ENCODE measurements at regions of chr17 and their contacts with region 1.

Region 1: DNA sequence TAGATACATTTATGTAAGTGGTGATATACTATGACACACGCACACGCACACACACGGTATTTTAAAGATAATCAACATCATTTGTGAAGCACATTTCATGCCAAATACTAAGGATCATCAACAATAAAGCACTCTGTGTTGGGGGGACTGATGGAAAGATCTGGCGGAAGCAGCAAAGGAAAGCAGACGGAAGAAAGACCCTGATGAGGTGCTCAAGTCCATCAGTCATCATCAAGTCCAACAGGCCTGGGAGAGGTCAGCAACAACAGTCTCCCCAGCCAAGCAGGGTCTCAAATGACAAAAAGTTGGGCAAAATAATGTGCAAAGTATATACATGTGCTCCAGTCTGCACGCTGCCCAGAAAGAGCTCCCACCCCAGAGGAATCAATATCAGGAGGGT is 55.5 kb downstream of the HIC1 start:
- DNase-seq: no peak
- H3K4me3 ChIP-seq: no peak overlapping the region
- H3K27ac ChIP-seq: no peak overlapping the region
- H3K4me1 ChIP-seq: peaks cover 11% of the 10 kb centered on the region
- CTCF ChIP-seq: no peak

Region 2: GRCh38 chr17:1967213-1967612 is 143.2 kb before region 1 on chr17:
- CTCF ChIA-PET with region 1: no interaction called
- POLR2A ChIA-PET with region 1: no interaction called
- intact Hi-C with region 1: no loop called
- DNase-seq: no peak
- H3K4me3 ChIP-seq: no peak overlapping the region
- H3K27ac ChIP-seq: no peak overlapping the region
- H3K4me1 ChIP-seq: no peaks in the 10 kb centered on the region
- CTCF ChIP-seq: no peak

Region 3: DNA sequence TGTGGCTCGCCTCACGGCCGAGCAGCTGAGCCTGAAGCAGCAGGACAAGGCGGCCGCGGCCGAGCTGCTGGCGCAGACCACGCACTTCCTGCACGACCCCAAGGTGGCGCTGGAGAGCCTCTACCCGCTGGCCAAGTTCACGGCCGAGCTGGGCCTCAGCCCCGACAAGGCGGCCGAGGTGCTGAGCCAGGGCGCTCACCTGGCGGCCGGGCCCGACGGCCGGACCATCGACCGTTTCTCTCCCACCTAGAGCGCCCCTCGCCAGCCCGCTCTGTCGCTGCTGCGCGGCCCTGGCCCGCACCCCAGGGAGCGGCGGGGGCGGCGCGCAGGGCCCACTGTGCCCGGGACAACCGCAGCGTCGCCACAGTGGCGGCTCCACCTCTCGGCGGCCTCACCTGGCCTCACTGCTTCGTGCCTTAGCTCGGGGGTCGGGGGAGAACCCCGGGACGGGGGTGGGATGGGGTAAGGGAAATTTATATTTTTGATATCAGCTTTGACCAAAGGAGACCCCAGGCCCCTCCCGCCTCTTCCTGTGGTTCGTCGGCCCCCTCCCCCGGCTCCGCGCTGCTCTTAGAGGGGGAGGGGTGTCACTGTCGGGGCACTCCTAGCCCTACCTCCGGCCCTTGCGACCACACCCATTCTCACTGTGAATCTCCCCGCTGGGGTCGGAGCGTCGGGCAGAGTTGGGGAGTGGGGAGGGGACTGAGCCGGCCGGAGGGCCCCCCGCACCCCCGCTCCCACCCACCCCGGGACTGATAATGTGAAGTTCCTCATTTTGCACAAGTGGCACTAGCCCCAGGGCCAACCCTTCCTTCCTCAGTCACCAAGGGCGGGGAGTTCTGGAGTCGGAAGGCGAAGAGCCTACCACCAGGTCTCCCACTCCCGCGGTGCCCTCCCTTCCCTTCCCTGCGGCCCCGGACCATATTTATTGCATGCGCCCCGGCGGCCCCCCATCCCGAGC is 51.6 kb before region 1 on chr17:
- CTCF ChIA-PET with region 1: no interaction called
- POLR2A ChIA-PET with region 1: no interaction called
- intact Hi-C with region 1: no loop called
- DNase-seq: peak; percentile 57
- H3K4me3 ChIP-seq: no peak overlapping the region
- H3K27ac ChIP-seq: no peak overlapping the region
- H3K4me1 ChIP-seq: peaks cover 37% of the 10 kb centered on the region
- CTCF ChIP-seq: peak; percentile 76

Region 4: GRCh38 chr17:2122641-2123302 is 12.3 kb after region 1 on chr17:
- CTCF ChIA-PET with region 1: no interaction called
- POLR2A ChIA-PET with region 1: interaction called, 13 read pairs
- intact Hi-C with region 1: no loop called
- DNase-seq: no peak
- H3K4me3 ChIP-seq: no peak overlapping the region
- H3K27ac ChIP-seq: no peak overlapping the region
- H3K4me1 ChIP-seq: peaks cover 28% of the 10 kb centered on the region
- CTCF ChIP-seq: no peak

Region 5: GRCh38 chr17:2192367-2193057 is 82.1 kb after region 1 on chr17:
- CTCF ChIA-PET with region 1: no interaction called
- POLR2A ChIA-PET with region 1: no interaction called
- intact Hi-C with region 1: no loop called
- DNase-seq: peak; percentile 66
- H3K4me3 ChIP-seq: no peak overlapping the region
- H3K27ac ChIP-seq: no peak overlapping the region
- H3K4me1 ChIP-seq: peaks cover 11% of the 10 kb centered on the region
- CTCF ChIP-seq: no peak

Measured in OCI-LY7 (cell line).